Right cardiac atrium (tissue), 5 donors: ENCODE measurements at regions of chr10 and their contacts with region 1.

Region 1: DNA sequence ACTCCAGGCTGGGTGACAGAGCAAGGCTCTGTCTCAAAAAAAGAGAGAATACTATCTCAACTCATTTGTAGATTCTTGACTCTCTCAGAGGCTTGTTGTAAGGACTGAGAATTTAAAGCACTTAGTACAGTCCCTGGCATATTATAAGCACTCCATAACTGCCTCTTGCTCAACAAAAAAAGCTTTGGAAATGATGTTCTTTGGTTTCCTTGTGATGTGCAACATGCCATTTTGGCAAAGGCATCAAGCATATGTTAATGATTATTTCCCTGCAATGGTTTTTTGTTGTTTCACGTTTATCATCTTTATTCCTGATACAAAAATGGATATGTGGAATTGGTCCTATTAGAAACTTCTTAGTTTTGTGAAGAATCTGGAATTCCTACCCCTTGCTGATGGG is 15.7 kb downstream of the NOLC1 start:
- DNase-seq: no peak
- ATAC-seq: no peak
- H3K4me3 ChIP-seq: no peak overlapping the region
- H3K27ac ChIP-seq: no peak overlapping the region
- H3K4me1 ChIP-seq: no peaks in the 10 kb centered on the region
- H3K27me3 ChIP-seq: no peaks in the 10 kb centered on the region

Region 2: GRCh38 chr10:102352066-102352715 is 184.3 kb after region 1 on chr10:
- intact Hi-C with region 1: loop called in 3 of 4 experiments (anchors 5 to 10 kb)
- DNase-seq: peak; percentile 48 to 66 (median 55)
- ATAC-seq: peak; percentile 60 to 73
- H3K4me3 ChIP-seq: no peak overlapping the region
- H3K27ac ChIP-seq: no peak overlapping the region
- H3K4me1 ChIP-seq: no peaks in the 10 kb centered on the region
- H3K27me3 ChIP-seq: no peaks in the 10 kb centered on the region